ENCODE measurements at regions of chr13 and their contacts with region 1.

Region 1: GRCh38 chr13:91133941-91134802 is 213.3 kb upstream of the MIR17HG start:
- DNase-seq: peak in 4 of 9 experiments; percentile 4 to 49 (median 31)
- ATAC-seq: no peak
- H3K4me3 ChIP-seq: no peak overlapping the region
- H3K4me3 Mint-ChIP-seq: no peak overlapping the region
- H3K27ac ChIP-seq: no peak overlapping the region
- H3K27ac Mint-ChIP-seq: no peak overlapping the region
- H3K4me1 ChIP-seq: no peaks in the 10 kb centered on the region
- H3K4me1 Mint-ChIP-seq: no peaks in the 10 kb centered on the region
- H3K27me3 ChIP-seq: no peaks in the 10 kb centered on the region
- H3K27me3 Mint-ChIP-seq: no peaks in the 10 kb centered on the region
- CTCF ChIP-seq: peak; percentile 67

Region 2: DNA sequence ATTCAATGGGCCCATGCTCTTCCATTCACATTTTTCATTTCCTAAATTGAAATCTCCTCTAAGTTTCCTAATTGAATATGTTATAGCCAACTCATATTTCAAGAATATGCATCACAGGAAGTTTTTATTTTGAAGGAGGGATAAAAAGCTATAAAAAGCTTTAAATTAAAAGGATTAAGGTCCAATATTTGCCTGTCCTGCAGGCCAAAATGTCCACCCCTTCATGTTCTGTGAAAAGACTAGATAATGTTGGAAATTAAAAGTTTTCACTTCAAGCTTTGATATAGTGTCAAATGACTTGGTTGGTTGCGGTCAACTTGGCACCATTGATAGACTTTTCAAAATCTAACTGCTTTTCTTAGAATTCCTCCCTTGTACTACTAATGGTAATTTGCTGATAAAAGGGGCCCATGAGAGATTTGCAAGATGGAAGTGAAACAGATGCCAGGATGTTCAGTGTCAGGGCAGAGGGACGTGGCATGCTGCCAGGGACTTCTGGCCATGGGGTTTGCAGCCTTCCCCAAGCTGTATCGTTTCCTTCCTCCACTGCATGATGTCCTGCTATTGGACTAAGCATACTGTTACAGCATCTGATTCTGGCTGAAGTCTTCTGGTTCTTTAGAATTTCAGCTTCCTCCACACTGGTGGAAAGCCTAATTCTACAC is 334.0 kb before region 1 on chr13:
- CTCF ChIA-PET with region 1: no interaction called
- POLR2A ChIA-PET with region 1: no interaction called
- intact Hi-C with region 1: no loop called
- DNase-seq: peak in 1 of 9 experiments; percentile 1
- ATAC-seq: no peak
- H3K4me3 ChIP-seq: no peak overlapping the region
- H3K4me3 Mint-ChIP-seq: no peak overlapping the region
- H3K27ac ChIP-seq: no peak overlapping the region
- H3K27ac Mint-ChIP-seq: no peak overlapping the region
- H3K4me1 ChIP-seq: no peaks in the 10 kb centered on the region
- H3K4me1 Mint-ChIP-seq: no peaks in the 10 kb centered on the region
- H3K27me3 ChIP-seq: no peaks in the 10 kb centered on the region
- H3K27me3 Mint-ChIP-seq: no peaks in the 10 kb centered on the region
- CTCF ChIP-seq: no peak

Region 3: GRCh38 chr13:91086936-91087716 is 47.0 kb before region 1 on chr13:
- CTCF ChIA-PET with region 1: no interaction called
- POLR2A ChIA-PET with region 1: no interaction called
- intact Hi-C with region 1: no loop called
- DNase-seq: no peak
- ATAC-seq: no peak
- H3K4me3 ChIP-seq: no peak overlapping the region
- H3K4me3 Mint-ChIP-seq: no peak overlapping the region
- H3K27ac ChIP-seq: no peak overlapping the region
- H3K27ac Mint-ChIP-seq: no peak overlapping the region
- H3K4me1 ChIP-seq: no peaks in the 10 kb centered on the region
- H3K4me1 Mint-ChIP-seq: no peaks in the 10 kb centered on the region
- H3K27me3 ChIP-seq: no peaks in the 10 kb centered on the region
- H3K27me3 Mint-ChIP-seq: no peaks in the 10 kb centered on the region
- CTCF ChIP-seq: no peak

Region 4: DNA sequence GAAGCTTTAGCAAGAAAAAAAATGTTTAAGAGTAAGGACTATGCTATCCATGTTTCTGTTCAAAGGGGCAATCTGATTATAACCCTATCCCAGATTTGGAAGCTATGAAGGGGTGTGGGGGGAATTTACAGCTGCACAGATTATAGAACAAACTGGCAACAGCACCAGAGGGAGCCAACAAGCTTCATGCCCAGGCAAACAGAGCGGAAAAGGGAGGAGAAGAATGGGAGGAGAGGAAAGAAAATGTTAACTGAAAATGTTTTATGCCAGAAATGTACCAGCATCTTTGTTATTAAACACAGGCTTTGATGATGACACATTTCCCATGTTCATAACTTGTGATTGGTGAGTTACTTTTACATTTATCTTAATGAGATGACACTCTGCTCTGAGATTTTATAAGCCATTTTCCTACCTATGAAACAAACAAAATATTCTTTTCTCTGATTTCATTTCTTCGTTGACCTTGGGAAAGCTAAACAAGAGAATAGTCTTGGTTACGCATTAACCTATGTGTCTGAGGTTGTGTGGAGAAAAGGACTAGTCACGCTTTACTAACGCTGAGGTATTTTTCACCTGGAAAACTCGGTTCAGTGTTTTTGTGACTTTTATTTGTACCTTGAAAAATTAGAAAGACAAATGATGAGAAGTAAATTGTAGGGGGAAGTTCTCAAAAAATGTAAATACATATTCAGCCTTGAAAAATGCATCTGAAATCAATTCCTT is 22.5 kb before region 1 on chr13:
- CTCF ChIA-PET with region 1: no interaction called
- POLR2A ChIA-PET with region 1: no interaction called
- intact Hi-C with region 1: no loop called
- DNase-seq: no peak
- ATAC-seq: no peak
- H3K4me3 ChIP-seq: no peak overlapping the region
- H3K4me3 Mint-ChIP-seq: no peak overlapping the region
- H3K27ac ChIP-seq: no peak overlapping the region
- H3K27ac Mint-ChIP-seq: no peak overlapping the region
- H3K4me1 ChIP-seq: no peaks in the 10 kb centered on the region
- H3K4me1 Mint-ChIP-seq: no peaks in the 10 kb centered on the region
- H3K27me3 ChIP-seq: no peaks in the 10 kb centered on the region
- H3K27me3 Mint-ChIP-seq: no peaks in the 10 kb centered on the region
- CTCF ChIP-seq: no peak

Region 5: DNA sequence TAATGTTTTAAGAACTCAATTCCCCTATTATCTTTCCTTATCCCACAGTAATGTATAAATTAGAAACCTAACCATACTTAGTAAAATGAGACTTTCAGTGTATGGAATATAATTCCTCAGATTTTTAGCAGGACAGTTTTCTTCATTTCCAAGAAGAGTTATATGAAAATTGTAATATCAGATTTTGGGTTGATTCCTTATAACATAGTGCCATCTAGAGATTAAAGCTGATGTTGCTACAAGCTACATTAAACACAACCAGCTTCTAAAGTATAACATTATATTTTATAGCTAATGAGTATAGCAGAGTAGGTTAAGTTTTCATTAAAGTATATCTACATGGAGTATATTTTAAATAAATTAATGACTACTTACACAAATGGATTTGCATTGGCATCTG is 113.6 kb after region 1 on chr13:
- CTCF ChIA-PET with region 1: no interaction called
- POLR2A ChIA-PET with region 1: no interaction called
- intact Hi-C with region 1: loop called (anchors 5 kb)
- DNase-seq: no peak
- ATAC-seq: no peak
- H3K4me3 ChIP-seq: no peak overlapping the region
- H3K4me3 Mint-ChIP-seq: no peak overlapping the region
- H3K27ac ChIP-seq: no peak overlapping the region
- H3K27ac Mint-ChIP-seq: no peak overlapping the region
- H3K4me1 ChIP-seq: no peaks in the 10 kb centered on the region
- H3K4me1 Mint-ChIP-seq: no peaks in the 10 kb centered on the region
- H3K27me3 ChIP-seq: peaks cover 0 to 3% of the 10 kb centered on the region in 2 experiments
- H3K27me3 Mint-ChIP-seq: peaks cover 11% of the 10 kb centered on the region
- CTCF ChIP-seq: no peak

Region 6: DNA sequence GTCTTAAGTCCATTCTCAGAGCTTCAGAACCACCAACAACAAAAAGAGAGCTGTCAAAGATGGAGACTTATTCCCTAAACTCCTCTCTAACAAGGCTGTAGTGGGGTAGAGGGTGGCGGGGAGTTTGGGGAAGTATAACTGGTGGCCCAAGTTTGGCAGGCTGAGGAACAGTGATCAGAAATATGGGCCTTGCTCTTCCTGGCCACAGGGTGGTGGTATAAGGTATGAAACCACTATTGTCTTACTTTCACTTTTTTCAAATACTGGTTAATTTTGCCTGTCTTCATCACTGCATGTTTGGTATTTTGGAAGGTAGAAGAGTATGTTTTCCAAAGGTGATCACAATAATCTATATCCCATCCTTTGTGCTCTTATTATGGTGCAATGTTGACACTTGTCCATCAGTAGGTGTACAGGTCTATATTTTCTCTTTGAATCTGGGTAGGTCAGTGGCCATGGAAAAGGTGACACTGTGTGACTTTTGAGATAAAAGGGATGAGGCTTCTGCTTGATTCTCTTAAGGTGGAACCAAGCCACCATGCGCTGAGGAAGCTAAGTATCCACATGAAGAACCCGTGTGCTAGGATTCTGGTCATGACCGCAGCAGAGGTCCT is 241.1 kb after region 1 on chr13:
- CTCF ChIA-PET with region 1: no interaction called
- POLR2A ChIA-PET with region 1: no interaction called
- intact Hi-C with region 1: no loop called
- DNase-seq: peak in 2 of 9 experiments; percentile 30 to 47
- ATAC-seq: peak; percentile 55
- H3K4me3 ChIP-seq: no peak overlapping the region
- H3K4me3 Mint-ChIP-seq: no peak overlapping the region
- H3K27ac ChIP-seq: no peak overlapping the region
- H3K27ac Mint-ChIP-seq: no peak overlapping the region
- H3K4me1 ChIP-seq: no peaks in the 10 kb centered on the region
- H3K4me1 Mint-ChIP-seq: peaks cover 3% of the 10 kb centered on the region
- H3K27me3 ChIP-seq: no peaks in the 10 kb centered on the region
- H3K27me3 Mint-ChIP-seq: peaks cover 15% of the 10 kb centered on the region
- CTCF ChIP-seq: peak; percentile 36

Region 7: GRCh38 chr13:91406619-91407018 is 272.4 kb after region 1 on chr13:
- CTCF ChIA-PET with region 1: no interaction called
- POLR2A ChIA-PET with region 1: no interaction called
- intact Hi-C with region 1: loop called in 1 of 2 experiments (anchors 2 kb)
- DNase-seq: peak in 3 of 9 experiments; percentile 16 to 62 (median 53)
- ATAC-seq: peak; percentile 14
- H3K4me3 ChIP-seq: no peak overlapping the region
- H3K4me3 Mint-ChIP-seq: no peak overlapping the region
- H3K27ac ChIP-seq: no peak overlapping the region
- H3K27ac Mint-ChIP-seq: no peak overlapping the region
- H3K4me1 ChIP-seq: no peaks in the 10 kb centered on the region
- H3K4me1 Mint-ChIP-seq: no peaks in the 10 kb centered on the region
- H3K27me3 ChIP-seq: no peaks in the 10 kb centered on the region
- H3K27me3 Mint-ChIP-seq: peaks cover 17% of the 10 kb centered on the region
- CTCF ChIP-seq: no peak

Region 8: GRCh38 chr13:91459485-91459884 is 325.3 kb after region 1 on chr13:
- CTCF ChIA-PET with region 1: no interaction called
- POLR2A ChIA-PET with region 1: no interaction called
- intact Hi-C with region 1: loop called (anchors 10 kb)
- DNase-seq: peak in 2 of 9 experiments; percentile 6 to 26
- ATAC-seq: no peak
- H3K4me3 ChIP-seq: no peak overlapping the region
- H3K4me3 Mint-ChIP-seq: no peak overlapping the region
- H3K27ac ChIP-seq: no peak overlapping the region
- H3K27ac Mint-ChIP-seq: no peak overlapping the region
- H3K4me1 ChIP-seq: no peaks in the 10 kb centered on the region
- H3K4me1 Mint-ChIP-seq: no peaks in the 10 kb centered on the region
- H3K27me3 ChIP-seq: no peaks in the 10 kb centered on the region
- H3K27me3 Mint-ChIP-seq: peaks cover 19% of the 10 kb centered on the region
- CTCF ChIP-seq: no peak

Region 9: DNA sequence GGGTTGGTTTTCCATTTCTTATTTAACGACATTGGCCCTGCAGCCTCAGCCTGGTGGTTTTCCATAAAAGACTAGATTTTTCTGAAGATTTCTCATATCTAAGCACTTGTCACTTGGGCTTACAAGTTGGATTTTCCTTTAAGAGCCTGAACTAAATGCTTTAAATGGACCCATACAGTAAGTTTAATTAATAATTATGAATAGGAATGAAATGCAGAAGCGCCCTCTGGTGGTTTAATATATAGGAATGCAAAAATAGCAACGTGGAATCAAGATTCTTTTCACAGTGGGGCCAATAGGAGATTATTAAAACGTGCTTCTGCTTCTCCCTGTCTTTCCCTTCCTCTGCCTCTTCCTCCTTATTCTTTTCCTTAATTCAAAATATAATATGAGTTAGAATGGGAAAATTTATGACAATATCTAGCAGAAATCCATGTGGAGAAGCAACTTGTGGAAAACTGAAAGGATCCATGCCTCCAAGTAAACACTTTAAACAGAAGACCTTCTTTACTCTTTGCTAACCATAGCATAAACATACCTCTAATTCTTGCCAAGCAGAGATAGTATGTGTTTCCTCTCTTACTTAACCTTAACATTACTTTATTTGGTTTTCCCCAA is 588.2 kb after region 1 on chr13:
- CTCF ChIA-PET with region 1: interaction called, 5 read pairs
- POLR2A ChIA-PET with region 1: no interaction called
- intact Hi-C with region 1: loop called (anchors 5 kb)
- DNase-seq: peak in 2 of 9 experiments; percentile 17 to 24
- ATAC-seq: no peak
- H3K4me3 ChIP-seq: no peak overlapping the region
- H3K4me3 Mint-ChIP-seq: no peak overlapping the region
- H3K27ac ChIP-seq: no peak overlapping the region
- H3K27ac Mint-ChIP-seq: no peak overlapping the region
- H3K4me1 ChIP-seq: no peaks in the 10 kb centered on the region
- H3K4me1 Mint-ChIP-seq: no peaks in the 10 kb centered on the region
- H3K27me3 ChIP-seq: no peaks in the 10 kb centered on the region
- H3K27me3 Mint-ChIP-seq: no peaks in the 10 kb centered on the region
- CTCF ChIP-seq: peak; percentile 60